Caco-2 (cell line): ENCODE measurements at regions of chr3 and their contacts with region 1.

Region 1: DNA sequence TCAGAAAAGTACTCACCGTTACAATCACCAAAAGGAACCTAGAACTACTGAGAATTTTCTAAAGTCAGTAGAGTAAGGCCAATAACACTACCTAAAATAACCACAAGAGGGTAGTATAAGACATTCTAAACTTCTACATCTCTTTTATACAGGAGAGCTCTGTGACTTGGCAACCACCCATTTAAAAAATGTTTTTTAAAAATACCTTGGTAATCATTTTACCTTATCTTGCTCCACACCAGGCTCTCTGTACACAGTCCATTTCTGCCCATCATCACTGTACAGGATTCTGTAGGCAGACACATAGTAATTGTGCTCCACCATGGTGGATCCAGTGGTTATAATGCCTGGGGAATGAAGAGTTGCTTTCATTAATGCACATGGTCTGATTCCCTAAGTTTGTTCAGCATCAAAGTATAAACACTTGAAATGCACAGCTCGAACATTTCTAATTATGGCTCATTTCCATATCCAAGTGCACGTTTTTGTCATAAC is 54.5 kb downstream of the ST3GAL6 start:
- DNase-seq: peak in 1 of 2 experiments; percentile 22
- H3K4me3 ChIP-seq: no peak overlapping the region
- H3K4me3 Mint-ChIP-seq: no peak overlapping the region
- H3K27ac Mint-ChIP-seq: no peak overlapping the region
- H3K4me1 ChIP-seq: peaks cover 12% of the 10 kb centered on the region
- H3K4me1 Mint-ChIP-seq: peaks cover 13% of the 10 kb centered on the region
- H3K27me3 ChIP-seq: no peaks in the 10 kb centered on the region
- H3K27me3 Mint-ChIP-seq: no peaks in the 10 kb centered on the region
- CTCF ChIP-seq: peak; percentile 42 to 44

Region 2: GRCh38 chr3:98522244-98523090 is 295.1 kb before region 1 on chr3 and contains the start of gene CLDND1:
- CTCF ChIA-PET with region 1: no interaction called
- POLR2A ChIA-PET with region 1: no interaction called
- intact Hi-C with region 1: loop called (anchors 5 kb)
- DNase-seq: peak; percentile 95
- H3K4me3 ChIP-seq: peak within 1 kb of the TSS; percentile 64
- H3K4me3 Mint-ChIP-seq: peak within 1 kb of the TSS; percentile 84
- H3K27ac Mint-ChIP-seq: peak within 1 kb of the TSS; percentile 84
- H3K4me1 ChIP-seq: no peaks in the 10 kb centered on the region
- H3K4me1 Mint-ChIP-seq: no peaks in the 10 kb centered on the region
- H3K27me3 ChIP-seq: no peaks in the 10 kb centered on the region
- H3K27me3 Mint-ChIP-seq: no peaks in the 10 kb centered on the region
- CTCF ChIP-seq: no peak
- total RNA-seq, gene CLDND1: 56.0 TPM in 2 replicates

Region 3: DNA sequence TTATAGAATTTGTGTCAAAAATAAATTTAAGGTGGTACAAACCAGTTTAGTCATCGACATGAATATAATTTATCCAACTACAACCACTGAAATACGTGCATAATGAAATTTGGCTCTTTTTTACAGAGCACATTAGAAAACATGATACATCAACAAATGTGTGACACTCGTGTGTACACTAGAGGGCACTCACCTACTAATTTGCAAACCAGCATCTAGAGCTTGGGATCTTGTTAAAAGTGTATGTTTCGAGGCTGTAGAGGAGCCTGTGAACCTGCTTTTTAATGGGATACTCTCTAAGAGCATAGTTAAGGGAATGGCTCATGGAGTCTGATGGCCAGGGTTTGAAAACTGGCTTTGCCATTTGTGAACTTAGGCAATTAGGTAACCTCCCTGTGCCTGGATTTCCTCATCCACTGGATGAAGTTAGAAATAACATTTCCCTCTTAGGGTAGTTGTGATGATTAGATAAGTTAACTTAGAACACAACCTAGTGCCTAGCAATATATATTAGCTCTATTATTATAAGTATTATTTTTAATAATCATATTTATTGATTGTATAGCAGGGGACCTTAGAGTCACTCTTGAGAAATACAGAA is 215.4 kb before region 1 on chr3:
- CTCF ChIA-PET with region 1: interaction called, 6 read pairs
- POLR2A ChIA-PET with region 1: no interaction called
- intact Hi-C with region 1: loop called (anchors 1 kb)
- DNase-seq: peak; percentile 52 to 53
- H3K4me3 ChIP-seq: no peak overlapping the region
- H3K4me3 Mint-ChIP-seq: no peak overlapping the region
- H3K27ac Mint-ChIP-seq: no peak overlapping the region
- H3K4me1 ChIP-seq: no peaks in the 10 kb centered on the region
- H3K4me1 Mint-ChIP-seq: no peaks in the 10 kb centered on the region
- H3K27me3 ChIP-seq: no peaks in the 10 kb centered on the region
- H3K27me3 Mint-ChIP-seq: no peaks in the 10 kb centered on the region
- CTCF ChIP-seq: peak; percentile 73 to 74

Region 4: GRCh38 chr3:98877132-98877531 is 59.5 kb after region 1 on chr3:
- CTCF ChIA-PET with region 1: no interaction called
- POLR2A ChIA-PET with region 1: no interaction called
- intact Hi-C with region 1: loop called (anchors 5 kb)
- DNase-seq: no peak
- H3K4me3 ChIP-seq: peak overlapping the region; percentile 2; the same call in 1 of the 2 replicates
- H3K4me3 Mint-ChIP-seq: peak overlapping the region; percentile 65
- H3K27ac Mint-ChIP-seq: peak overlapping the region; percentile 75
- H3K4me1 ChIP-seq: peaks cover 60% of the 10 kb centered on the region
- H3K4me1 Mint-ChIP-seq: peaks cover 53% of the 10 kb centered on the region
- H3K27me3 ChIP-seq: no peaks in the 10 kb centered on the region
- H3K27me3 Mint-ChIP-seq: no peaks in the 10 kb centered on the region
- CTCF ChIP-seq: no peak

Region 5: DNA sequence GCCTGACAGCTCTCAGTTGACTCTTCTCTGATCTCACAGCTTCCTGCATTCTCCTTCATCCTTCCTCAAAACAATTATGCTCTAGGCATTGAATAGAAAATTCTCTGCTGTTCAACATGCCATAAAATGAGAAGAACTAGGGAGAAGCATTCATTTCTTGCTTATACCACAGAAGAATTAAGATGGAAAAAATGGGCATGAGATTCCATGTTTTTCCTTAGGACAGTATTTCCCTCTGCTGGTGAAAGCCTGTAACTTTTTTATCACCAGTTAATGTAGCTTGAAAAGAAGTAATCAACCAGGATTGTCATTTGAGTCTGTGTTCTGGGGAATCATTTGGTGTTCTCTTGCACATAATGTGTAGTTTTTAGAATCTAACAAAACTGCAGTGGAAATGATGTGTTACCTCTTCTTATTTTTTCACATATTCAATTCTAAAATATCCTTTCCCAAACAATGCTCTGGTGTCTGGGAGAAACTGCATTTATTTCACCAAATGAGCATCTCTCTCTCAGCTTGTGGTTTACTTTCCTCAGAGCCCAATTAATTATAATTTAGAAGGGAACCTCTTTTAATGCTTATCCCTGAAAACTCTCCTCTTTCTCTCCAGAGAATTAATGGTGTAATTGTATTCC is 176.7 kb after region 1 on chr3:
- CTCF ChIA-PET with region 1: interaction called, 46 read pairs
- POLR2A ChIA-PET with region 1: no interaction called
- intact Hi-C with region 1: loop called (anchors 1 kb)
- DNase-seq: peak in 1 of 2 experiments; percentile 17
- H3K4me3 ChIP-seq: no peak overlapping the region
- H3K4me3 Mint-ChIP-seq: no peak overlapping the region
- H3K27ac Mint-ChIP-seq: no peak overlapping the region
- H3K4me1 ChIP-seq: no peaks in the 10 kb centered on the region
- H3K4me1 Mint-ChIP-seq: no peaks in the 10 kb centered on the region
- H3K27me3 ChIP-seq: no peaks in the 10 kb centered on the region
- H3K27me3 Mint-ChIP-seq: peaks cover 7% of the 10 kb centered on the region
- CTCF ChIP-seq: peak; percentile 51 to 60

Region 6: DNA sequence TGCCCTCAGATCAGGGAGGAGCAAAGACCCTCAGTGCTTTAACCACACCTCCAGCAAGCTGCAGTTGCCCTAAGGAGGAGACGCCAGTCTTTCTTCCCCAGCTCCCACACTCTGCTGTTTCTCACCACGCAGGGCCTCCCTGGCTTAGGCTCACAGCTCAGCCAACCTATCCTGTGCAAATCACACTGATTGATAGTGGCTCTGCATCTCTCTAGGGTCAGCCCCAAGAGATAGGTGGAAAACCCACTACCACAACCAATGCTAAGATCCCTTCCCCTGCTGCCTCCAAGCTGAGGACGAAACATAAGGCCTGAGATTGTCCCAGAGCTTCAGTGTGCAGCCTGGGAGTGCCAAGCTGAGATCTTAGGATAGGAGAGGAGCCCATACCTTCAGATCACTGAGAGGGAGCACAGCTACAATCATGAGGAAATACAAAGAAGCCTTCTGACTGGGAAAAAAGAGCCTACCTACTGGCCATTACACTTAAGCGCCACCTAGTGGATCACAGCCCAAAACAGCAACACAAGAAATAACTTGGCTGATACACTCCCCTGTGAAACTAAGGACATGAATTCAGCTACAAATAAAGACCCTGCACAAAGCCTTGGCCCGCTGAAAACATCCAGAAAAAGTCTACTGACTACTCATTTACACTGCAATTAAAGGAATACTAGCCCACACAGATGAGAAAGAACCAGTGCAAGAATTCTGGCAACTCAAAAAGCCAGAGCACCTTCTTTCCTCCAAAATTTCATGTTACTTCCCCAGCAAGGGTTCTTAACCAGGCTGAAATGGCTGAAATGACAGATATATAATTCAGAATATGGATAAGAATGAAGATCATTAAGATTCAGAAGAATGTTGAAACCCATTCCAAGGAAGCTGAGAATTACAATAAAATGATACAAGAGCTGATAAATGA is 355.4 kb after region 1 on chr3:
- CTCF ChIA-PET with region 1: interaction called, 5 read pairs
- POLR2A ChIA-PET with region 1: no interaction called
- intact Hi-C with region 1: loop called (anchors 1 kb)
- DNase-seq: peak; percentile 51 to 61
- H3K4me3 ChIP-seq: no peak overlapping the region
- H3K4me3 Mint-ChIP-seq: no peak overlapping the region
- H3K27ac Mint-ChIP-seq: no peak overlapping the region
- H3K4me1 ChIP-seq: no peaks in the 10 kb centered on the region
- H3K4me1 Mint-ChIP-seq: no peaks in the 10 kb centered on the region
- H3K27me3 ChIP-seq: no peaks in the 10 kb centered on the region
- H3K27me3 Mint-ChIP-seq: no peaks in the 10 kb centered on the region
- CTCF ChIP-seq: peak; percentile 68 to 76